Pancreas (tissue), 10 donors: ENCODE measurements at regions of chr21 and their contacts with region 1.

Region 1: DNA sequence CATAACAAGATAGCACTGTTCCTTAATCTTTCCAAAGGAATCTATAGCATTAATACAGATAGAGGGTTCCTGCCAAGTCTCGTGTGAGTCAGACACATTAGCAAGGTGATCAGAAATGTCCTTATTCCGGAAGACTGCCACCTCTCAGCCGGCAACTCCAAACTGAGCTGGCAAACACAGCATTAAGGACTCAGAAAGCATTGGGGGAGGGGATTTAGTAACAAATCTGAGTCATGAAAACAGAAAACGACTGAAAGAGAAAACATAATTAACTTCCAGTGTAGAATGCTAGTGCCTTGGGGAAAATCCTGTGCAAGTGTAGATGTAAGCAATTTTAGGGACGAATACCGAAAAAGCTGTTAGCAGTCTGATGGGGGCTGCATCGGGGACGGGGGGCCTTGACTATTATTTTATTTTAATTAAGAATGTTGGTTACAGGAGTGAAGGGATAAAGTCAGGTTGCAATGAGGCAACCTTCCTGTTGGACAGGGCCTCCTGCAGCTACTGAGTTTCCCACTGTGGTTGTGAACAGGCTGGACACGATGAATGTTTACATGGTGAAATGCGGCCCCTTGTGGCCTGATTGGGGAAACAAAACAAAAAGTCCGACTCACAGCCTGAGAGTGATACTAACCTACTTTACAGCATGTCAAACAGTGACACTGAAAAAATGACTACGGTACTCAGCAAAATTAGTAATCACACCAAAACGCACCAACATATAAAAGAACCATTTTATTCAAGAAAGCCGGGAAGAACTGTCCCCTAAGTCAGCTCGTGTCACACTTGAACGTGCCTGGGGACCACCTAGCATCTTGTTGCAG is 20.7 kb downstream of the MIS18A start:
- DNase-seq: peak in 5 of 6 donors; percentile 61 to 82 (median 69)
- ATAC-seq: peak; percentile 83 to 95 (median 93)
- H3K4me3 ChIP-seq: no peak overlapping the region
- H3K27ac ChIP-seq: no peak overlapping the region
- H3K4me1 ChIP-seq: peaks cover 3 to 12% (median 8%) of the 10 kb centered on the region in 3 donors
- H3K27me3 ChIP-seq: no peaks in the 10 kb centered on the region
- CTCF ChIP-seq: peak; percentile 50 to 60 (median 55)

Region 2: DNA sequence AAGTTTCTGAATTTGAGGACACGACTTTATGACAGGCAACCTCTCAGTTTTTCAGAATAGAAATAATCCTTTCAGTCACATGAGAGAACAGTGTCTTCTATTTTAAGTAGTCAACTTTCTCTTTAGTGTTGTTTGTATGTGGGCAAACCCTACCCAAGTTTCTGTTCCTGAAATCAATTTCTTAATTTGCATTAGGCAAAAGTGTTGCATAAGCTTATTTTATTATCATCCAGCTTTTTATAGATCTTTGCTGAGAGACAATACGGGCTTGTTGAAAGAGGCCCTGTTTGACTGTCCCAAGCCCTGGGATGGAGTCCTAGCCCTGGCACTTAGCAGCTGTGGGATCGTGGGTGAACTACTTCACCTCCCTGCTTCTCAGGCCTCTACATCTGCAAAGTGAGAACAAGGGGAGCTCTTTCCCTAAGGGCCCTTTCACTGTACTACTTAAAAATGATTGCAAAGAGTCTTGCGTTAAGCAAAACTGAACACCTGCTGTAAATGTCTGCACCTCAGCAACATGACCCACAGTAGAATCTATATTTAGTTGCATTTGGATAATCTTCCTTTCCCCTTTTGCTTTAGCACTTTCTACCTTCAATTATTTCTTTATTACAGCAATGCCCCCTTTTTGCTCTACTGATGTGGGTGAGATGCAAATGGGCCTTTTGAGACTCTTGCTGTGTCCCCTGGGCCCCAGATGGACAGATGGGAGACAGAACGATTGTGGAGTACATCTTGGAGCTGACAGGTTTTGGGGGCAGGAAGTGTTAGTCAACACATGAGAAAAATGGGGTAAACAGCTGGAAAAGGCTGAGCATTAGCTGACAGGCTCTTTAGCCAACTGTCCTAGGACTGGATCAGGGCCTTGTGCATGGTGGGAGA is 485.3 kb before region 1 on chr21:
- intact Hi-C with region 1: loop called in 1 of 3 experiments (anchors 10 kb)
- DNase-seq: no peak
- ATAC-seq: no peak
- H3K4me3 ChIP-seq: no peak overlapping the region
- H3K27ac ChIP-seq: no peak overlapping the region
- H3K4me1 ChIP-seq: no peaks in the 10 kb centered on the region
- H3K27me3 ChIP-seq: no peaks in the 10 kb centered on the region
- CTCF ChIP-seq: no peak

Region 3: GRCh38 chr21:31798842-31799704 is 459.1 kb before region 1 on chr21:
- intact Hi-C with region 1: loop called in 1 of 3 experiments (anchors 5 kb)
- DNase-seq: no peak
- ATAC-seq: no peak
- H3K4me3 ChIP-seq: no peak overlapping the region
- H3K27ac ChIP-seq: no peak overlapping the region
- H3K4me1 ChIP-seq: no peaks in the 10 kb centered on the region
- H3K27me3 ChIP-seq: peaks cover 0 to 6% (median 0%) of the 10 kb centered on the region in 4 donors
- CTCF ChIP-seq: no peak

Region 4: DNA sequence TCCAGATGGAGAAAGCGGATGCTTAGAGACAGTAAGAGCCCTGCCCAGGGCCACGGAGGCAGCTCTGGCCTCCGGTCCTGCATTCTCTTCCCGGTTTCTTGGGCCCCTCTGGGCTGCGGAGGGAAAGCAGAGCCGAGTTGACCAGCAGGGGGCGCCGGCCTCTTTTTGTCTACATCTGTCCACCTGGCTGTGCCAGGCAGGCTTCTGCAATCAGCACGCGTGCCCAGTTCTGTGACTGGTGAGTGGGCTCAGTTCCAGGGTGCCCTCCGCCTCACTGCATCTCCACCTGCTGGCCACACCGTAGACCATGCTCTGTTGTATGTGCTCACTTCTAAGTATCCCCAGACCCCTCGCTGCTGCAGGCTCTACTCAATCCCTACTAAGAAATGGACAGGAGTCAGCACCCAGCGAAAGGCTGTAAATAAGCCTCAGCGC is 392.1 kb before region 1 on chr21:
- intact Hi-C with region 1: loop called (anchors 5 to 10 kb)
- DNase-seq: peak; percentile 94 to 99 (median 98)
- ATAC-seq: peak; percentile 97 to 99 (median 98)
- H3K4me3 ChIP-seq: no peak overlapping the region
- H3K27ac ChIP-seq: no peak overlapping the region
- H3K4me1 ChIP-seq: peaks cover 0 to 5% (median 0%) of the 10 kb centered on the region in 3 donors
- H3K27me3 ChIP-seq: no peaks in the 10 kb centered on the region
- CTCF ChIP-seq: peak; percentile 96 to 99 (median 97)